Panc1 (cell line): ENCODE measurements at regions of chr1 and their contacts with region 1.

Region 1: DNA sequence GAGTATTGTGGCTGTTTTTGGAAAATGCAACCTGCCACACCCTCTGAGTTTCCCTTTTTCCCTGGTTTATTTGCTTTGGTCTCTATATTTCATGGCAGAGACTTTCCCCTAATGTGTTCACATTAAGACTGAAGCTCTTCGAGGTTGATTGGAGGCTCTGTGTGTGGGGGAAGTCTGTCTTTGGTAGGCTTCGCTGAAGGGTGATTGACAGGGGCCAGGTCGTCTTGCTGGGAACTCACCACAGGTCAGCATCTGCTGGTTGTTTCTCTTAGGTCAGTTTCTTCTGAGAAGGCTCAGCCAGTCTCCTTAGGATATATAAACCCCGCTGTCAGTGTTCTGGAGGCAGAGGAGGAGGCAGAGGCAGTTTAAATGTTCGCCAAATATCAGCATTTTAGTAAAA is 249.4 kb downstream of the RPS6KC1 start:
- DNase-seq: no peak
- ATAC-seq: no peak
- H3K4me3 ChIP-seq: no peak overlapping the region
- H3K27ac ChIP-seq: no peak overlapping the region
- H3K4me1 ChIP-seq: no peaks in the 10 kb centered on the region
- H3K27me3 ChIP-seq: no peaks in the 10 kb centered on the region
- CTCF ChIP-seq: no peak

Region 2: GRCh38 chr1:213176341-213176740 is 124.1 kb before region 1 on chr1:
- CTCF ChIA-PET with region 1: no interaction called
- POLR2A ChIA-PET with region 1: no interaction called
- in situ Hi-C with region 1: no loop called
- intact Hi-C with region 1: no loop called
- DNase-seq: no peak
- ATAC-seq: no peak
- H3K4me3 ChIP-seq: no peak overlapping the region
- H3K27ac ChIP-seq: no peak overlapping the region
- H3K4me1 ChIP-seq: no peaks in the 10 kb centered on the region
- H3K27me3 ChIP-seq: no peaks in the 10 kb centered on the region
- CTCF ChIP-seq: no peak

Region 3: GRCh38 chr1:214296860-214297745 is 996.7 kb after region 1 on chr1:
- CTCF ChIA-PET with region 1: no interaction called
- POLR2A ChIA-PET with region 1: interaction called, 10 read pairs
- in situ Hi-C with region 1: no loop called
- intact Hi-C with region 1: no loop called
- DNase-seq: no peak
- ATAC-seq: no peak
- H3K4me3 ChIP-seq: no peak overlapping the region
- H3K27ac ChIP-seq: no peak overlapping the region
- H3K4me1 ChIP-seq: peaks cover 2% of the 10 kb centered on the region; the same call in 1 of the 2 replicates
- H3K27me3 ChIP-seq: no peaks in the 10 kb centered on the region
- CTCF ChIP-seq: no peak